ENCODE measurements at regions of chr7 and their contacts with region 1.

Region 1: DNA sequence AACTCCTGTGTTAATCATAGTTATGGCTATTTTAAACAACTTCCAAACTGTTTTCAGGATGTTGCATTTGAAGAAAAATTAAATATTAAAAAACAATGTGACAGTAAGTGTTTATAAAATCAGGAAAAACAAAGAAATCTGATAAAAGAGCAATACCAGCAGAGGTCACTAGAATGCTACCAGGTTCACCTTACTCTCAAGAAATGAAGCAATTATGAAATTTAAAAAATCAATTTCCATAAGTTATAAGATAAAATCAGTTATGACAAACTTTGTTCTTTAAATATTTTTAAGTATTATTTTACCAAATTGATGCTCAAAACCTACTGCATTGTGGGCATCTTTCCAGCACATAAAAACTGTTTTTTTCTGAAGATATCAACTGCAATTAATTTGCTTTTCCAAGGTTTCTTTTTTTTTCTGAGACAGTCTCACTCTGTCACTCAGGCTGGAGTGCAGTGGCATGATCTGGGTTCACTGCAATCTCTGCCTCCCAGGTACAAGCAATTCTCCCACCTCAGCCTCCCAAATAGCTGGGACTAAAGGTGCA is 50.7 kb upstream of the RHEB start:
- DNase-seq: no peak
- ATAC-seq: no peak
- H3K4me3 ChIP-seq: no peak overlapping the region
- H3K27ac ChIP-seq: no peak overlapping the region
- H3K4me1 ChIP-seq: no peaks in the 10 kb centered on the region
- H3K27me3 ChIP-seq: no peaks in the 10 kb centered on the region
- CTCF ChIP-seq: peak; percentile 23 to 44 (median 34); a peak in 3 of 6 replicates
- EP300 ChIP-seq: no peak
- POLR2A ChIP-seq: no peak
- RAD21 ChIP-seq: peak; percentile 65

Region 2: GRCh38 chr7:151608031-151608551 is 37.6 kb after region 1 on chr7:
- CTCF ChIA-PET with region 1: no interaction called
- POLR2A ChIA-PET with region 1: no interaction called
- RAD21 ChIA-PET with region 1: no interaction called
- SMC1A ChIA-PET with region 1: no interaction called
- in situ Hi-C with region 1: no loop called
- intact Hi-C with region 1: no loop called
- DNase-seq: no peak
- ATAC-seq: no peak
- H3K4me3 ChIP-seq: no peak overlapping the region
- H3K27ac ChIP-seq: no peak overlapping the region
- H3K4me1 ChIP-seq: no peaks in the 10 kb centered on the region
- H3K27me3 ChIP-seq: no peaks in the 10 kb centered on the region
- CTCF ChIP-seq: no peak
- EP300 ChIP-seq: no peak
- POLR2A ChIP-seq: no peak
- RAD21 ChIP-seq: no peak

Region 3: GRCh38 chr7:151705636-151706276 is 135.3 kb after region 1 on chr7:
- CTCF ChIA-PET with region 1: no interaction called
- POLR2A ChIA-PET with region 1: no interaction called
- RAD21 ChIA-PET with region 1: no interaction called
- SMC1A ChIA-PET with region 1: interaction called, 3 read pairs
- in situ Hi-C with region 1: no loop called
- intact Hi-C with region 1: loop called (anchors 1 kb)
- DNase-seq: no peak
- ATAC-seq: peak; percentile 85
- H3K4me3 ChIP-seq: no peak overlapping the region
- H3K27ac ChIP-seq: no peak overlapping the region
- H3K4me1 ChIP-seq: no peaks in the 10 kb centered on the region
- H3K27me3 ChIP-seq: no peaks in the 10 kb centered on the region; a peak in 1 of 4 replicates
- CTCF ChIP-seq: peak; percentile 44 to 52 (median 46); a peak in 5 of 6 replicates
- EP300 ChIP-seq: no peak
- POLR2A ChIP-seq: no peak
- RAD21 ChIP-seq: peak; percentile 37; the same call in 1 of the 2 replicates

Region 4: DNA sequence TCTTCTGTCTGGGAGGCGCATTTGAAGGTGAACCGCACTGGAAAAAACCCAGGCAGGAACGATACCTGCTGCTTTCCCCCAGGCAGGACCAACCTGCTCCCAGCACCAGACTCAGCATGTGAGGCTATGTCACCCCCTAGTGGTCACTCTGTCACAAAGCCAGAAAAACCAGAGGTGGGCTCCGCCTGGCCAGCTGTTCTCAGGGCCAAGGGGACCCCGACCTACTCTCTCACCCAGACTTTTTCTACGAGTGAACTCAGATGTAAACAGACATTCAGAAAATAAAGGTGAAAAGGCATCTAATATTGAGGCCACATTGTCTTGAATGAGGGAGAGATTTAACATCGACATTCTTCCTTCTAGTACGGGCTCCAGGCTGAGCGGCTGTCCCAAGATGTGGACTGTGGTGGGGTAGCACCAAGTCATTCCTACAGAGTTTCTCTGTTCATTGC is 189.2 kb after region 1 on chr7:
- CTCF ChIA-PET with region 1: interaction called, 9 read pairs
- POLR2A ChIA-PET with region 1: no interaction called
- RAD21 ChIA-PET with region 1: no interaction called
- SMC1A ChIA-PET with region 1: no interaction called
- in situ Hi-C with region 1: no loop called
- intact Hi-C with region 1: loop called (anchors 1 kb)
- DNase-seq: no peak
- ATAC-seq: peak; percentile 91
- H3K4me3 ChIP-seq: no peak overlapping the region; the same call in 1 of the 2 replicates
- H3K27ac ChIP-seq: no peak overlapping the region
- H3K4me1 ChIP-seq: no peaks in the 10 kb centered on the region
- H3K27me3 ChIP-seq: no peaks in the 10 kb centered on the region; a peak in 1 of 4 replicates
- CTCF ChIP-seq: peak; percentile 87 to 89 (median 88)
- EP300 ChIP-seq: no peak
- POLR2A ChIP-seq: no peak
- RAD21 ChIP-seq: peak; percentile 94